ENCODE measurements at regions of chr15 and their contacts with region 1.

Region 1: GRCh38 chr15:55993111-55993803 is at the start of gene NEDD4:
- DNase-seq: peak; percentile 61
- ATAC-seq: peak; percentile 84
- H3K4me3 Mint-ChIP-seq: peak within 1 kb of the TSS; percentile 89
- H3K27ac Mint-ChIP-seq: no peak within 1 kb of the TSS
- H3K4me1 Mint-ChIP-seq: peaks cover 10% of the 10 kb centered on the region
- H3K27me3 Mint-ChIP-seq: peaks cover 16% of the 10 kb centered on the region
- CTCF ChIP-seq: no peak
- total RNA-seq, gene NEDD4: 0.47 and 0.66 TPM in 2 replicates

Region 2: GRCh38 chr15:56365075-56365711 is 371.9 kb after region 1 on chr15 and contains the start of gene TEX9:
- CTCF ChIA-PET with region 1: no interaction called
- POLR2A ChIA-PET with region 1: interaction called, 4 read pairs
- intact Hi-C with region 1: loop called (anchors 10 kb)
- DNase-seq: peak; percentile 73
- ATAC-seq: peak; percentile 92
- H3K4me3 Mint-ChIP-seq: peak within 1 kb of the TSS; percentile 95
- H3K27ac Mint-ChIP-seq: peak within 1 kb of the TSS; percentile 77
- H3K4me1 Mint-ChIP-seq: peaks cover 32% of the 10 kb centered on the region
- H3K27me3 Mint-ChIP-seq: peaks cover 3% of the 10 kb centered on the region
- CTCF ChIP-seq: no peak
- total RNA-seq, gene TEX9: 29.7 and 31.3 TPM in 2 replicates